CD8-positive, alpha-beta T cell (primary cell): ENCODE measurements at regions of chr20 and their contacts with region 1.

Region 1: GRCh38 chr20:56400090-56400542 is 7.7 kb downstream of the CSTF1 start:
- DNase-seq: peak in 8 of 9 experiments; percentile 42 to 87 (median 69)
- ATAC-seq: peak; percentile 90
- H3K4me3 ChIP-seq: no peak overlapping the region
- H3K4me3 Mint-ChIP-seq: no peak overlapping the region
- H3K27ac ChIP-seq: peak overlapping the region in 1 of 2 experiments; percentile 16
- H3K27ac Mint-ChIP-seq: no peak overlapping the region
- H3K4me1 ChIP-seq: peaks cover 11% of the 10 kb centered on the region
- H3K4me1 Mint-ChIP-seq: peaks cover 21% of the 10 kb centered on the region
- H3K27me3 ChIP-seq: no peaks in the 10 kb centered on the region
- H3K27me3 Mint-ChIP-seq: no peaks in the 10 kb centered on the region
- CTCF ChIP-seq: peak; percentile 85

Region 2: GRCh38 chr20:56439771-56440291 is 39.7 kb after region 1 on chr20:
- CTCF ChIA-PET with region 1: interaction called, 5 read pairs
- POLR2A ChIA-PET with region 1: no interaction called
- intact Hi-C with region 1: loop called in 1 of 2 experiments (anchors 5 kb)
- DNase-seq: peak in 3 of 9 experiments; percentile 23 to 54 (median 48)
- ATAC-seq: peak; percentile 43
- H3K4me3 ChIP-seq: no peak overlapping the region
- H3K4me3 Mint-ChIP-seq: peak overlapping the region; percentile 60
- H3K27ac ChIP-seq: peak overlapping the region; percentile 16 to 39
- H3K27ac Mint-ChIP-seq: peak overlapping the region; percentile 83
- H3K4me1 ChIP-seq: peaks cover 52% of the 10 kb centered on the region
- H3K4me1 Mint-ChIP-seq: peaks cover 61% of the 10 kb centered on the region
- H3K27me3 ChIP-seq: no peaks in the 10 kb centered on the region
- H3K27me3 Mint-ChIP-seq: no peaks in the 10 kb centered on the region
- CTCF ChIP-seq: no peak

Region 3: DNA sequence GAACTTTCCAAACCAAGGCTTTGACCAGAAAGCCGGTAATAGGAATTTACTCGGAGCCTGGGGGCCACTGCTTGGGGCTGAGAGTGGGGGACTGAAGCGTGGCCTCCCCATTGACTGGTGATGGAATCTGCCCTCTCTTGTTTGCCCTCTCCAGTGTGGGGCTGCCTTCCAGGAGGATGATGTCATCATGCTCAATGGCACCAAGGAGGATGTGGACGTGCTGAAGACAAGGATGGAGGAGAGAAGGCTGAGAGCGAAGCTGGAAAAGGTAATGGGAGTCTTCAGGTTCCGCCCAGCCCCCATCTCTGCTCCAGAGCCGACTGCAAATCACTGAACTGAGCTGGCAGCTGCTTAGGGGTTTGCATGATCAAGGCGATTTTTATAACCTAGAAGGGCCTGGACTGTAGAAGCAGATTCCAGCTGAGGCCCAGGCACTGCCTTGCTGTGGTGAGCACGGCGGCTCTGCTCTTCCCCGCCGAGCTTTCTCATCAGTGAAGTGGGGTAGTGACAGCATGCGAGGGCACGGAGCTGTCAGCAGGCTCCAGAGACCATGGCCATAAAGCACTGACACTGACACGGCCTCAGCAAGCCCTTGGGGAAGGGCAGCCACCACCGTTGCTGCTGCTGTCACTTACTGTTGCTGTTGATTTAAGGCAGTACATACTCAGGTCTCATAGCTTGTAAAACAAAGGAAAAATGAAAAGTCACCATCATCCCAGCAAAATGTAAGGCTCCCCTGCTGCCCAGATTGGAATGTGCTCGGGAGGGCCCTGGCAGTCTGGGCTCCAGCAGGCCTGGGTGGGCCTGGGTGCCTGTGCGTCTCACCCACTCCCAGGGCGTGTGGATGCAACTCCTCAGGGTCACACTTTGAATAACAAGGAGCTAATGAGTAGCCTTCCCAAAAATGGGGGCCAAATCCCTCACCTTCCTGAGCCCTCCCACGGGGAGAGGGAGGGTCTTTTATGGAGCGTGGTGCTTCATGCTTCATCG is 113.3 kb after region 1 on chr20:
- CTCF ChIA-PET with region 1: interaction called, 7 read pairs
- POLR2A ChIA-PET with region 1: no interaction called
- intact Hi-C with region 1: loop called (anchors 1 to 2 kb)
- DNase-seq: no peak
- ATAC-seq: no peak
- H3K4me3 ChIP-seq: no peak overlapping the region
- H3K4me3 Mint-ChIP-seq: no peak overlapping the region
- H3K27ac ChIP-seq: no peak overlapping the region
- H3K27ac Mint-ChIP-seq: no peak overlapping the region
- H3K4me1 ChIP-seq: no peaks in the 10 kb centered on the region
- H3K4me1 Mint-ChIP-seq: no peaks in the 10 kb centered on the region
- H3K27me3 ChIP-seq: no peaks in the 10 kb centered on the region
- H3K27me3 Mint-ChIP-seq: no peaks in the 10 kb centered on the region
- CTCF ChIP-seq: no peak